ENCODE measurements at regions of chr2 and their contacts with region 1.

Region 1: DNA sequence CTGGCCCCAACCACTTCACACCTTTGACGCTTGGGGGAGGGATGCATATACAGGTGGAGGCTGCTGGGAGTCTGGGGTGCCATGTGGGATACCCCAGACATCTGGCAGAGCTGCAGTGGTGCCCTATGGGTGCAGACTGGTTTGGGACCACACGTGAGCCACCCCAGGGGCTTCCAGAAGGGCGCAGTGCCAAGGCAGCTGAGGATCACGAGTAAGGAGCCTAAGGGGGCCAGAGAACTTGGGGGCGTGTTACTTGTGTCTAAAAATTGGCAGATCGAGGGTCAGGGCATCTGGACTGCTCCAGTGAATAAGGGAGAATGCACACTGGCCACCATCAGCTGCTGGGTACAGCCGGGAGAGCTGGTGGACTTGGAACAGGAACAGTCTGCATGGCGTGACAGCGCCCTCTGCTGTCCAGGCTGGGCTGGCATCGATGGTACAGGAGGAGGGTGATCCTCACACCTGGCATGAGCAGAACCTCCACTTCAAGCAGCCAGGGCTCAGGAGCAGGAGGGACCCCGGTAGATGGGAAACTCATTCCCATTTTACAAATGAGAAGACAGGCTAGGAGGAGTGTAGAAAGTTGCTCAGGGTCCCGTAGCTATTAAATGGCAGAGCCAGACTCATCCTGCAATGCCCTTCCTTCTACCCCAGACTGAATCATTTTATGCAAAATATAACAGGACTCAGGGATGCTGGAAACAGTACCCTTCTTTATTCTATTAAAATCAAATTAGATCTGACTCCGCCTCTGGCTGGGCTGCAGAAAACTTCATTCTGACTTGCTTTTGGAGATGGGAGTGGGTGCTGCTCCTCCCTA is 60.4 kb downstream of the ATOH8 start:
- DNase-seq: peak; percentile 84
- H3K27ac ChIP-seq: no peak overlapping the region
- CTCF ChIP-seq: peak; percentile 93

Region 2: GRCh38 chr2:85723707-85724360 is 90.4 kb before region 1 on chr2:
- CTCF ChIA-PET with region 1: interaction called, 99 read pairs
- POLR2A ChIA-PET with region 1: interaction called, 3 read pairs
- DNase-seq: no peak
- H3K27ac ChIP-seq: no peak overlapping the region
- CTCF ChIP-seq: no peak

Region 3: GRCh38 chr2:85750587-85751575 is 63.3 kb before region 1 on chr2:
- CTCF ChIA-PET with region 1: interaction called, 40 read pairs
- POLR2A ChIA-PET with region 1: no interaction called
- DNase-seq: peak; percentile 54
- H3K27ac ChIP-seq: no peak overlapping the region
- CTCF ChIP-seq: peak; percentile 63

Region 4: GRCh38 chr2:85834466-85834865 is 20.3 kb after region 1 on chr2:
- CTCF ChIA-PET with region 1: no interaction called
- POLR2A ChIA-PET with region 1: no interaction called
- DNase-seq: no peak
- H3K27ac ChIP-seq: no peak overlapping the region
- CTCF ChIP-seq: no peak

Region 5: GRCh38 chr2:85865539-85866164 is 51.5 kb after region 1 on chr2:
- CTCF ChIA-PET with region 1: no interaction called
- POLR2A ChIA-PET with region 1: no interaction called
- DNase-seq: no peak
- H3K27ac ChIP-seq: no peak overlapping the region
- CTCF ChIP-seq: no peak

Region 6: DNA sequence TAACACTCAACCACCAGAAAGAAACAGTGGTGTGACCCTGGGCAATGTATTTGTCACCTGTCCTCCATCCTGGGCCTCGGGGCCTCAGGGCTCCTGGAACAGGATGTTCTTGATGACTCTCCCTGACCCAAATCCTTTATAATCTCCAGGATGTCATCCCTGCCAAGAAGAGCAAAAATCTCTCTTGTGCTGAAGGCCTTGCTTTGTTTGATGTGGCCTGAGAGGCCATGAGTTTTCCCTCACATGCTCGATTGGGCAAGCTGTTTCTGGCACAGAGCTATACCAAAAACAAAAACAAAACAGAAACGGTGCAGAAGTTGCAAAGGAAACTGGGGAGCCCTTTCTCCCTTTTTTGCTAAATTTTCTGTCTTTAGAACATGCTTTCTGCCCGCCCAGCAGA is 110.3 kb after region 1 on chr2:
- CTCF ChIA-PET with region 1: no interaction called
- POLR2A ChIA-PET with region 1: no interaction called
- DNase-seq: peak; percentile 41
- H3K27ac ChIP-seq: peak overlapping the region; percentile 82
- CTCF ChIP-seq: no peak